CD4-positive, alpha-beta T cell (primary cell): ENCODE measurements at regions of chr6 and their contacts with region 1.

Region 1: DNA sequence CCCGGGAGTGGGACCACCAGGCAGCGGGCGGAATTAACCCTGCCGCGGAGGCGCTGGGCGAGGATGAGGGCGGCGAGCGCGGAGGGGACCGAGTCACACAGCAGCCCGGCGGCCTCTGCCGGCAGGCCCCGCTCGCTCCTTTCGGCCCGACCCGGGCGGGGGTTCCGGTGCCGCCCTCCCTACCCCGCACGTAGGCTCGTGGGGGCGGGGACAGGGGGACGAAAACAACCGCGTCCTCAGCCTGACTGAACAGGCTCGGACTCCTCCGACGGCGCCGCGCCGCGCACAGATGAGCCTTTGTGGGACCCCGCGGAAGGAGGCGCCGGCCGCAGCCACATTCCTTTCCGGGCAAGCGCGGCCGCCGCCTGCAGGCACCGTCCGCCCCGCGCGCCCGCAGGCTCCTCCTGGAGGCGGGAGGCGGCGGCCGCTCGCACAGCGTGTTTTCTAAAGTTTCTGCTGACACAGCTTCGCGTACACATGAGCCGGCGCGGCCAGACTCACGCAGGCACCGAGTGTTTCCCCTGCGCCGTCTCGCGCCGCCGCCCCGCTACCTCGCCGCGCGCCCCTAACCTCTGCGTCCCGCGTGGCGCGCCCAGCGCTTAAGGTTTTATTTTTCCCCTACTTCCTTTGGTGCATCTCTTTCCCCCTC is 244.3 kb downstream of the ARID1B start:
- DNase-seq: peak; percentile 78 to 95 (median 88)
- ATAC-seq: peak; percentile 77
- H3K4me3 ChIP-seq: peak overlapping the region; percentile 96
- H3K4me3 Mint-ChIP-seq: peak overlapping the region; percentile 99
- H3K27ac ChIP-seq: peak overlapping the region; percentile 98 to 99
- H3K27ac Mint-ChIP-seq: peak overlapping the region; percentile 100
- H3K4me1 ChIP-seq: peaks cover 14% of the 10 kb centered on the region
- H3K4me1 Mint-ChIP-seq: peaks cover 72% of the 10 kb centered on the region
- H3K27me3 ChIP-seq: no peaks in the 10 kb centered on the region
- H3K27me3 Mint-ChIP-seq: no peaks in the 10 kb centered on the region
- CTCF ChIP-seq: peak; percentile 42

Region 2: GRCh38 chr6:155314092-155314772 is 1707.2 kb before region 1 on chr6 and contains the start of gene TFB1M:
- CTCF ChIA-PET with region 1: no interaction called
- POLR2A ChIA-PET with region 1: no interaction called
- intact Hi-C with region 1: loop called in 1 of 2 experiments (anchors 5 kb)
- DNase-seq: peak; percentile 88 to 99 (median 96)
- ATAC-seq: peak; percentile 94
- H3K4me3 ChIP-seq: peak within 1 kb of the TSS; percentile 74
- H3K4me3 Mint-ChIP-seq: peak within 1 kb of the TSS; percentile 97
- H3K27ac ChIP-seq: peak within 1 kb of the TSS; percentile 84 to 92
- H3K27ac Mint-ChIP-seq: peak within 1 kb of the TSS; percentile 91
- H3K4me1 ChIP-seq: no peaks in the 10 kb centered on the region
- H3K4me1 Mint-ChIP-seq: peaks cover 48% of the 10 kb centered on the region
- H3K27me3 ChIP-seq: no peaks in the 10 kb centered on the region
- H3K27me3 Mint-ChIP-seq: no peaks in the 10 kb centered on the region
- CTCF ChIP-seq: no peak
- total RNA-seq, gene TFB1M: 7.2 to 9.2 TPM

Region 3: DNA sequence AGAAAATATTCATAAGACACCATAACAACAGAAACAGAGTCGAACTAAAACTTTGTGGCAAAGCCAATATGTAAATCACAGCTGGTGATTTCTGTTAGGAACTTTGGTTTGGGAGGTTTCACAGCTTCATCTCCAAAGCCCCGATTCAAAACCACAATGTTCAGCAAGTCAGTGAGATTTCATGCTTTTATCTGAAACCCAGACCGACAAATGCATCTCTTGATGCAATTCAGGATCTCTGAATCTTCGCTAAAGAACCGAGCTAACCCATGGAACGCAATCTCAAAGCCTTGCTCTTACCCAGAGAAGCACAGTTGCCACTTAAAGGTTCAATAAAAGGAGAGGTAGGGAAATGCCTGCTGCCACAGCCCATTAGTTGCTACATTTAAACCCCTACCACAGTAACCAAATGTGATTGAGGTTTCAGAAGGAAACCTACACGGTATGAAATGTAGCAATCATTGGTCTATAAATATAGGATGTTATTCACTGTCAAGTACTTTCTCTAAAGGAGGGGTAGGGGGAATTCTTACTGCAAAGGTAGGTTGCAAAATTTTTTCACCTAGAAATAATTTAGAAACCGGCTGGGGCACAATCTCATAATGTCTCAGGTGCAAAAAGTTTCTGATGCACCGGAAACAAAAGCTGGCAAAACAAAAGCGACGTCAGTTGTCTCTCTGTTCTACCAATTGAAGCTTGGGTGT is 625.2 kb before region 1 on chr6:
- CTCF ChIA-PET with region 1: no interaction called
- POLR2A ChIA-PET with region 1: interaction called, 25 read pairs
- intact Hi-C with region 1: no loop called
- DNase-seq: peak in 11 of 14 experiments; percentile 1 to 80 (median 19)
- ATAC-seq: peak; percentile 72
- H3K4me3 ChIP-seq: peak overlapping the region; percentile 37
- H3K4me3 Mint-ChIP-seq: peak overlapping the region; percentile 78
- H3K27ac ChIP-seq: peak overlapping the region; percentile 78 to 91
- H3K27ac Mint-ChIP-seq: peak overlapping the region; percentile 97
- H3K4me1 ChIP-seq: peaks cover 54% of the 10 kb centered on the region
- H3K4me1 Mint-ChIP-seq: peaks cover 97% of the 10 kb centered on the region
- H3K27me3 ChIP-seq: no peaks in the 10 kb centered on the region
- H3K27me3 Mint-ChIP-seq: no peaks in the 10 kb centered on the region
- CTCF ChIP-seq: no peak

Region 4: GRCh38 chr6:156686995-156687788 is 334.3 kb before region 1 on chr6:
- CTCF ChIA-PET with region 1: interaction called, 3 read pairs
- POLR2A ChIA-PET with region 1: interaction called, 6 read pairs
- intact Hi-C with region 1: loop called (anchors 1 kb)
- DNase-seq: peak; percentile 53 to 94 (median 76)
- ATAC-seq: peak; percentile 76
- H3K4me3 ChIP-seq: peak overlapping the region; percentile 82
- H3K4me3 Mint-ChIP-seq: peak overlapping the region; percentile 92
- H3K27ac ChIP-seq: peak overlapping the region; percentile 91 to 97
- H3K27ac Mint-ChIP-seq: peak overlapping the region; percentile 92
- H3K4me1 ChIP-seq: peaks cover 14% of the 10 kb centered on the region
- H3K4me1 Mint-ChIP-seq: peaks cover 24% of the 10 kb centered on the region
- H3K27me3 ChIP-seq: no peaks in the 10 kb centered on the region
- H3K27me3 Mint-ChIP-seq: no peaks in the 10 kb centered on the region
- CTCF ChIP-seq: no peak

Region 5: GRCh38 chr6:156953479-156954146 is 67.9 kb before region 1 on chr6:
- CTCF ChIA-PET with region 1: no interaction called
- POLR2A ChIA-PET with region 1: interaction called, 3 read pairs
- intact Hi-C with region 1: loop called in 1 of 2 experiments (anchors 5 kb)
- DNase-seq: peak in 10 of 14 experiments; percentile 13 to 89 (median 42)
- ATAC-seq: peak; percentile 99
- H3K4me3 ChIP-seq: no peak overlapping the region
- H3K4me3 Mint-ChIP-seq: no peak overlapping the region
- H3K27ac ChIP-seq: no peak overlapping the region
- H3K27ac Mint-ChIP-seq: peak overlapping the region; percentile 66
- H3K4me1 ChIP-seq: peaks cover 29% of the 10 kb centered on the region
- H3K4me1 Mint-ChIP-seq: peaks cover 85% of the 10 kb centered on the region
- H3K27me3 ChIP-seq: no peaks in the 10 kb centered on the region
- H3K27me3 Mint-ChIP-seq: no peaks in the 10 kb centered on the region
- CTCF ChIP-seq: peak; percentile 18

Region 6: GRCh38 chr6:157054531-157054979 is 33.1 kb after region 1 on chr6:
- CTCF ChIA-PET with region 1: interaction called, 5 read pairs
- POLR2A ChIA-PET with region 1: interaction called, 18 read pairs
- intact Hi-C with region 1: no loop called
- DNase-seq: peak in 6 of 14 experiments; percentile 5 to 90 (median 48)
- ATAC-seq: peak; percentile 93
- H3K4me3 ChIP-seq: no peak overlapping the region
- H3K4me3 Mint-ChIP-seq: peak overlapping the region; percentile 72
- H3K27ac ChIP-seq: peak overlapping the region; percentile 62 to 70
- H3K27ac Mint-ChIP-seq: peak overlapping the region; percentile 92
- H3K4me1 ChIP-seq: peaks cover 32% of the 10 kb centered on the region
- H3K4me1 Mint-ChIP-seq: peaks cover 55% of the 10 kb centered on the region
- H3K27me3 ChIP-seq: no peaks in the 10 kb centered on the region
- H3K27me3 Mint-ChIP-seq: no peaks in the 10 kb centered on the region
- CTCF ChIP-seq: no peak

Region 7: GRCh38 chr6:157379656-157380454 is 358.4 kb after region 1 on chr6:
- CTCF ChIA-PET with region 1: no interaction called
- POLR2A ChIA-PET with region 1: interaction called, 3 read pairs
- intact Hi-C with region 1: loop called in 1 of 2 experiments (anchors 5 kb)
- DNase-seq: peak; percentile 75 to 93 (median 82)
- ATAC-seq: peak; percentile 78
- H3K4me3 ChIP-seq: peak overlapping the region; percentile 95
- H3K4me3 Mint-ChIP-seq: peak overlapping the region; percentile 82
- H3K27ac ChIP-seq: peak overlapping the region; percentile 73 to 75
- H3K27ac Mint-ChIP-seq: peak overlapping the region; percentile 51
- H3K4me1 ChIP-seq: peaks cover 15% of the 10 kb centered on the region
- H3K4me1 Mint-ChIP-seq: peaks cover 13% of the 10 kb centered on the region
- H3K27me3 ChIP-seq: no peaks in the 10 kb centered on the region
- H3K27me3 Mint-ChIP-seq: no peaks in the 10 kb centered on the region
- CTCF ChIP-seq: no peak